Head of caudate nucleus (tissue), 42 donors: ENCODE measurements at regions of chr12 and their contacts with region 1.

Region 1: DNA sequence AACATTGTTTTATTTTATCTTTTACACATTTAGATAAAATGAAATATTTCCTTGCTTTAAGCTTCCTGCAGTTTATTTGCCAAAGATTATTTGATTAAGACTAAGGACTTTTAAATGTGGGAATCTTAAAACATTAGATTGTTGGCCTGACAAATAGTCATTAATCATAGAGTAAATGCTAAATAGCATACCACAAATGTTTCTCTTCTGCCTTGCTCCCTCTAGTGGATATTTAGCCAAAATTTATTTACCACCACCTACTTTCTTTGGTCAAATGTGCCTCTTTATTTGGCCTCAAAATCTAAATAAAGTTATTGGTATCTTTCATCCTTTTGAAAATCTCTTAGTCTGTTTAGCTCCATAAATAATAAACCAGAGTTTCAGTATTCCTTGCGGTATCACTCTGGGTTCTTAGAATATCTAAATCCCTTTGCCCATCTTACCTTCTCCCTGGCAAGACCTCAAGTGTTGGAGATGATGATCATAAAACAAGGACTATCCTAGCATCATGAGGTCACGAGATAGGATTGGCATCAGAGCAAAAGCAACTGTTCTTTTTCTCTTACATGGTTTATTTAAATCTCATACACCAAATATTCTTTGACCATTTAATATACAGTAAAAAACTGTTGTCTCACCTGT is 150.6 kb upstream of the AEBP2 start:
- DNase-seq: no peak

Region 2: GRCh38 chr12:18430425-18431048 is 858.2 kb before region 1 on chr12:
- intact Hi-C with region 1: loop called (anchors 10 kb)
- DNase-seq: peak in 32 of 42 donors; percentile 3 to 64 (median 20)

Region 3: GRCh38 chr12:19181666-19182426 is 106.9 kb before region 1 on chr12:
- intact Hi-C with region 1: loop called (anchors 5 kb)
- DNase-seq: no peak

Region 4: DNA sequence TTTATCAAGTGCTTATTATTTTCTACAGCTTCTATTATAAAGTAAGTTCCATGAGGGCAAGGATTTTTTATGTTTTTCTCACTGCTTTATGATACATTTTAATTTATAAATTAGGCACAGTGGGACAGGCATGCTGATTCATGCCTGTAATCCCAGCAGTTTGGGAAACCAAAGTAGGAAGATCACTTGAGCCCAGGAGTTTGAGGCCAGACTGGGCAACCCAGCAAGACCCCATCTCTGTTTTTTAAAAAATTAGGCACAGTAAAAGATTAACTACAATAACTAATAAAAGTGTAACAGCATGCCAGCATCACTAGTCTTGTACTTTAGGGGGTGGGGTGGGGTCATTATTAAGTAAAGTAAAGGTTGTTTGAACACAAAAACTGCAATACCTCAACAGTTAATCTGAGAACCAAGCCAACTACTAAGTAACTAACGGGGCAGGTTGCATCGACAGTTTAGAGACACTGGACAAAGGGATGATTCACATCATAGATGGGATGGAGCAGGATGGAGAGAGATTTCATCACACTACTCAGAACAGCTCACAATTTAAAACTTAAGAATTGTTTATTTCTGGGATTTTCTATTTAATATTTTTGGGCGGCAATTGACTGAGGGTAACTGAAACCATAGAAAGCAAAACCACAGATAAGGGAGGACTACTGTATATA is 39.7 kb before region 1 on chr12:
- intact Hi-C with region 1: no loop called
- DNase-seq: no peak

Region 5: GRCh38 chr12:19382111-19382526 is 93.4 kb after region 1 on chr12:
- intact Hi-C with region 1: no loop called
- DNase-seq: peak in 5 of 42 donors; percentile 5 to 35 (median 12)

Region 6: DNA sequence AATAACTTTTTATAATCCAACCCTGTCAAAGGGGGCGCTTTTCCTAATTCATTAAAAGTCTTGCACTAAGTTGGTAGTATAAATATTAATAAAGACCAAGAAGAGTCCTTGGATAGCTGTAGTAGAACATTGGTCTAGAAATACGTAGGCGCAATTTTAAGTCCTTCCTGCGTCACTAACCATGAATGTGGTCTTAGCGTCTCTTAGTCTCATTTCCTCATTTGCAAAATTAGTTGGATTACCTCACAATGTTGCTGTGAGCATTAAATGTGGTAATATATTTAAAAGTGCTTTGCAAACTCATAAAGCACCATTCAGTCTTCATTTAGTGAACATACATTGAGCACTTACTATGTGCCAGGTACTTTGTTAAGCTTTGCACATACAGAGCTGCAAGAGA is 300.2 kb after region 1 on chr12:
- intact Hi-C with region 1: no loop called
- DNase-seq: no peak

Region 7: DNA sequence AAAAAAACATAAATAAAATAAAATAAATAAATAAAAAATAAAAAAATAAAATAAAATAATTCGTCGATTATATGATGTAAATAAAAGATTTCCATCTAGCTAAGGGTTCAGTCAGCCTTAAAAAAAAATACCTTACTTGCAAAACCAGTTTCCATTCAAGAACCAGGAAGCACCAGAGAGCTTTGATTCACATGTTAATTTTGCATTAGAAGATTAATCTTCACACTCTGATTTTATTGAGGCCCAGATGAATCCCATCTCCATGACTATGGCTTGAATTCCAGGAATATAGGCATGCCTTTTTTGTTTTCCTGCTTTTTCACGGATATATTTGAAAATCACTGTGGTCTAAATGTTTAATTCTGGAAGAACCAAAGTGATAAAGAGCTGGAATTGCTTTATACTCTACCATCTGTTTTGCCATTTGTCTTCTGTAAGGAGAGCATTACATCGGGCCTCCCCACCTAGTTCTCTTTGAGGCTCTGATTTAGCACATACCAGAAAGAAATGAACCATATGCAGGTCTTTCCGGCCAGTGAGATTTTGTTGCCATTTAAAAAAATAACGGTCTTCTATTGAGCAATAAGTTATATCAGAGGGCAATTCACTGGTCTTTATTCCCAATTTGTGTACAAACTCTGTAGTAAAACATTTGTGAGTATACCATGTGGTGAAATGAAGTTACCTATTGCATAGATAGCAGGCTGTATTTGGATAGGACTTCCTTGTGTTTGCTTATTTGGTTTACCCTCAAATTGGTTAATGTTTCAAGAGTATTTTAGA is 326.1 kb after region 1 on chr12:
- intact Hi-C with region 1: no loop called
- DNase-seq: no peak